ENCODE measurements at regions of chr14 and their contacts with region 1.

Region 1: DNA sequence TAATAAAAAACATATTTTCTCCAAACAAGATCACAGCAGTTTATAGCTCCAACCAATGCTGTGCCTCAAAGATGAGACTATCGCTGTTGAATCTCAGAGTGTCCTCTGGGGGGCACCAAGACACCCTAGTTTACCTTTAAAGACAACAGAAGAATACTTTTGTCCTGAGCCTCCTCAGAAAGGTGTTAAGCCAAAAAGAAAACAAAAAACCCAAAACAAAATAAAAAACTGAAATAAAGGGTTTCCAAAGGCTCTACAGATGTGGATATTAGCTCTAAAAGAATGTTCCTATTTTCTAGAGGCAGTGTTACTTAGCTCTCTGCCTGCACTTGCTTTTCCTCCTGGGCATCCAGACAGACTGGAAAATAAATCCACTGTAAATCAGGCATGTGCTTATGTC is 86.9 kb upstream of the TTC7B start:
- DNase-seq: no peak

Region 2: DNA sequence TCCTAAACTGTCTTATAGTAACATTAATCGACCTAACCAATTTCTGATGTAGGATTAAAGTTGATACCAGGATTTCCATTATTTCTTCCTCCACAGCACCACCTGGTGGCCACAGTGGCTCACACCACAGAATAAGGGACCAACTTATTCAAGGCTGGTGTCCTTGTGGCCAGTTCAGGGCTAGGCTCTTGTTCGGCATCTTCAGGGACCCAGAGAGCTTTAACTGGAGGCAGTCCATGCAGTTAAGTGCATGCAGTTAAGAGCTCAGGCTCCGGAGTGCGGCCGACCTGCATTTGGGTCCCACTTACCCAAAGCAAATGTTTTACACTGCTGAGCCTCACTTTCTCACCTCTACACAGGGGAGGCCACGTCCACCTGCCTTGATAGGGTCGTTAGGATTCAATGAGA is 383.4 kb after region 1 on chr14:
- intact Hi-C with region 1: loop called (anchors 5 kb)
- DNase-seq: peak; percentile 87

Measured in cardiac septum (tissue), 1 donor.